BJ (cell line): ENCODE measurements at regions of chr1 and their contacts with region 1.

Region 1: DNA sequence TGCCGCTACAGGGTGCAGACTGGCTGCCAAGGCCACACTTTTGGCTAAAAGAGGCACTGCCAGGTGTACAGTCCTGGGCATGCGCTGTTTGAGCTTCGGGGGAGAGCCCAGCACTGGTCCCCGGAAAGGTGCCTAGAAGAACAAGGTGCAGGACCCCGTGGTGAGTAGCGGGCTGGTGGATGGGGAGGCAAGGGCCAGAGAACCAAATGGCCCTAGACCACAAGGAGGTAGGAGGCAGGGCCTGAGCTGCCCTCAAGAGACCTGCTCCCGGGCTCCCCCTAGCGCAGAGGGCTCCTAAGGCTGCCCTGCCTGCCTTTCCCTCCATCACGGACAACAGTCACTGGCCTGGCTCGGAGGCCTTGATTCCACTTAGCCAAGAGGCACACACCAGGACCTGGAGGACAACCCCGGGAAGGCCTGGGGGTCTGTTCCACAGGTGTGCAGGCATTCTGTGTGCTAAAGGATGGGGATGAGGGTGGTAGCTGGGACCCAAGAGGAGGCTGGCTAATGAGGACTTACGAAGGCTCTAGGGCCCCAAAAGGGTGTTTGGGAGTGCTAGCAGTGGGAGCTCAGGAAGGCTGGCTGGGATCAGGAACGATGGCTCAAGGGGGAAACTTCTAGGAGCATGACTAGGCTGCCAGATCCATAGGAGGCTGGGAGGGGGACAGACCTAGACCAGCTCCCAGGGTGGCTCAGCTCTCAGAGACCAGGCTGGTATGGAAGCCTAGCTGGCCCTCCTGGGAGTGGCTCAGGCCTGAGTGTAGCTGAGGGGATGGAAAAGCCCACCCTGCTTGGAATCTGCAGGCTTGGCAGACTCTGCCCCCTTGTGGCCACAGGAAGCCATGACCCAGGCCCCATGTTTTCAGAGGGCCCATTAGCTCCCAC is 742 bp downstream of the ARTN start:
- DNase-seq: no peak
- H3K4me3 ChIP-seq: no peak overlapping the region
- H3K27me3 ChIP-seq: no peaks in the 10 kb centered on the region
- CTCF ChIP-seq: peak; percentile 96

Region 2: DNA sequence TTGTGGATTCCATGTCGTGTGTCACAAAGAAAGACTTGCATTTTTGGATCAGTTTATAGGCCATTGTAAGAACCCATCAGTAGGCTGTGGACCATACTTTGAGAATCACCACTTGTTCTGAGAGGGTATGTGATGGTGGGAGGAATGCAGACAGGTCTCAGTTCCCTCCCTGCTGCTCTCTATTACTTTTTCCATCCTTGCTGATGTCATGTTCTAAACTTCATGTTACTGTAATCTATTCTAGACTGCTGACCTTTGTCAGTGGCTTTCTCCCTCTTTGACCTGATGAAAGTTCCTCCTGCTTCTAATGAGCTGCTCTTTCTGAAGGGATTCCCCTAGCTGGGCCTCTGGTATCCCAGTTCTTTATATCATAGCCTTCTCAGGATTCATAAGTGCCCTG is 180.9 kb before region 1 on chr1:
- CTCF ChIA-PET with region 1: interaction called, 46 read pairs
- POLR2A ChIA-PET with region 1: no interaction called
- DNase-seq: no peak
- H3K4me3 ChIP-seq: no peak overlapping the region
- H3K27me3 ChIP-seq: no peaks in the 10 kb centered on the region
- CTCF ChIP-seq: no peak

Region 3: DNA sequence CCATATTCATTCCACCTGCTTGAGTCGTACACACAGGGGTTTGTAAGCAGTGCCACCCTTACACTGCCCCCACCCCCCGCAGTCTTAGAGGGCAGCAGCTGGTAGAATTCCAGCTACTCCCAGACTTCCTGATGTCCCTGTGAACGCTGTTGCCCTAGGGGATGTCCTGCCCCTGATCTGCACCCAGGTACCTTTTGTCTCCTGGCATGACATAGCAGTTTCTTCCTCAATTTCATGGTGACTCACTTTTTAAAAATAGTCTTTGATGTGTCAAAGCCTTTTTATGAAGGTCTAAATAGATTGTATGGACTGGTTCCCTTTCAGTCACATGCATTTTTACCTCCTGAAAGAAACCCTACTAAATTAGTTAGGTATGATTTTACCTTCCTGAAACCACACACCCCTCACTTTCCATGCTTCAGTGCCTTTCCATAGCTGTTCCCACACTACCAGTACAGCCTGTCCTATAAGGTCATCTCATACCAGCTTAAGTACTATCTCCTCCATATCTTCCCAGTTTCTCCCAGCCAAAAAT is 150.6 kb before region 1 on chr1:
- CTCF ChIA-PET with region 1: interaction called, 29 read pairs
- POLR2A ChIA-PET with region 1: no interaction called
- DNase-seq: no peak
- H3K4me3 ChIP-seq: no peak overlapping the region
- H3K27me3 ChIP-seq: no peaks in the 10 kb centered on the region
- CTCF ChIP-seq: no peak

Region 4: DNA sequence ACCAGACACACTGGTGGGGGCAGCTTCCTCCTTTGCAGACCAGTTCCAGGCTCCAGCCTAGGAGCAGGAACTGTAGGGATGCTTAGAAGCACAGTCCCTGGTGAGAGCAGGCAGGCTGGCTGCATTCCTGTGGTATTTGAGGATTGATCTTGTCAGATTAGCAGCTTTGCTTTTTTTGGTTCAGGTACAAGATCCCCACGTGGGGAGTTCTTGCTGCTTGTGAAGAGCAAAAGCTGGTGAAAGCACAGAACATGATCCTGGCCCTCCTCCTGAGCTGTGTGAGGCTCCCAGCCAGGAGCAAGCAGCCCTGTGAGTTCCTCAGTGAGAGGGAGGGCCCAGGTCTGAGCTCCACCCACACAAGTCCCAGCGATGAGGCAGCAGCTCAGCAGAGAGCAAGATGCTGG is 76.0 kb before region 1 on chr1:
- CTCF ChIA-PET with region 1: interaction called, 14 read pairs
- POLR2A ChIA-PET with region 1: no interaction called
- DNase-seq: peak; percentile 97
- H3K4me3 ChIP-seq: no peak overlapping the region
- H3K27me3 ChIP-seq: no peaks in the 10 kb centered on the region
- CTCF ChIP-seq: no peak

Region 5: DNA sequence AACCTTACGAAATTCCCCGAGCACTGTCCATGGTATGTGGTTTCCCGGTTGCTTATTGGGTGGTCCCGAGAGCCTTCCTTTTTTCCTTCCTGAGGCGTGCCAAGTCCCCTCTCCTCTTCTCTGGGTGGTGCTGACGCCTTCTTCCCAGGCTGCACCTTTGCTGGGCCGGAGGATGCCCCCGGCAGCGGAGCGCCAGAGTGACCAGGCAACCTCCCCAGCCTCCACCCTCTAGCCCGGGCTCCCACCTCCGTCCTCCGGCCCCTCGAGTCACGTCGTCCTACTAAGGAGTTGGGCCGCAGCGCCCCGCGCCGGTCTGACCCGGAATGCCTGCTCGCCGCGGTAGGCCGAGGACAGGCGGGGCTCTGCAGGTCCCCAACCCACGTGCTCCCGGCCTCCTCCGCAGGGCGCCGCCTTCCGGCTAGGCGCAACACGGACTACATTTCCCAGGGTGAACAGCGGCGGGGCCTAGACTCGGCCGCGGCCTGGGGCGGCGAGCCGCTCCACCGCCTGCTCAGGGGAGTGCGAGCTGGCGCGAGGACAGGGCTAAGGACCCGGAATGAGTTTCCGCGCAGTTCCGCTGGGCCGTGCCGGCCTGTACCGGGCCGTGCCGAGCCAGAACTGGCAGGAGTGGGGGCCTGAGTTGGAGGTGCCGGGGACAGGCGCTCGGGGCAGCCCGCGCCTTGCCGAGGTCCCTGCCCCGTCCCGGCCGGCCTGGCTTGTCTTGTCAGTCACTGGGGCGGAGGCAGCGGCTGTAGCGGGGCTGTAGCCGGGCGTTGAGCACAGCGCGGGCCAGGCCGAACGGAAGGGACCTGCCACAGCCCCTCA is 12.1 kb after region 1 on chr1 and contains the start of gene IPO13:
- CTCF ChIA-PET with region 1: interaction called, 54 read pairs
- POLR2A ChIA-PET with region 1: no interaction called
- DNase-seq: peak; percentile 68
- H3K4me3 ChIP-seq: peak within 1 kb of the TSS; percentile 90
- H3K27me3 ChIP-seq: no peaks in the 10 kb centered on the region
- CTCF ChIP-seq: peak; percentile 72
- polyA plus RNA-seq, gene IPO13: 13.4 and 24.8 TPM in 2 replicates